ENCODE measurements at regions of chr19 and their contacts with region 1.

Region 1: DNA sequence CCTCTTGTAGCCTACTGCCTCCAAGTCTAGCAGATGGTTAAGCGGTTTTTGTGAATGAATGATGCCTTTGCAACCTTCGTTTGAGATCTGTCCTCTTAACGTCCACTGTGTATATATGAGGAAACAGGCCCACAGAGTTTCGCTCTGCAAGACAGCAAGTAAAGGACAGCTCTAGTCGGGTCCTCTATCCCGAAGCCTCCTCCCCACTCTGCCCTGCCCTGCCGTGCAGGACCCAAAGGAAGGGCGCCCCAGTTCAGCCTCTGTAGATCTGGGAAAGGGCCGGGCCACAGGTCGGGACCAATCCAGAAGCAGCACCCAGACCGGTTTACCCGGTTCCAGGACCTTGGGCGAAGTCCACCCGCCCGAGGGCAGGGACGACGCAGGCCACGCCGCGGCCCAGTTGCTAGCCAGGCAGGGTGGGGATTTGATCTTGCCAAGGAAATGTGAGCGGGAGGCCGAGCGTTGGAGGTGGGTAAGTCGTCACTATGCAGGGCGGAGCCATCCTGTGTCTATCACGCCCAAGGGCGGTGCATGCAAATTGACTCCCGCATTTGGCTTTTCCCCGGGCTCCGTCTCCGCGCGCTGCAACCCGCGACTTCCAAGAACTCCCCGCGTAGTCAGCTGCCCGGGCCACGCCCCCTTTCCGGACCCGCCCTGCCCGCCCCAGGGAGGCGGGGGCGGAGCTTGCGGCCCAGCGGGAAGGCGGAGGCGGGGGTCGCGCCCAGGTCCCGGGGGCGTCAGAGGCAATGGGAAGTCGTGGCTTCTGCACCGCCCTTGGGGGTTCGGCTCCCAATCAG is 12.5 kb downstream of the IER2 start:
- DNase-seq: peak; percentile 98
- ATAC-seq: peak; percentile 84
- H3K4me3 ChIP-seq: peak overlapping the region; percentile 63 to 81 (median 64)
- H3K27ac ChIP-seq: peak overlapping the region; percentile 99
- H3K4me1 ChIP-seq: peaks cover 52% of the 10 kb centered on the region
- H3K27me3 ChIP-seq: no peaks in the 10 kb centered on the region
- CTCF ChIP-seq: 0 out of 2 replicates have a peak, but pooled peaks have one; percentile 26
- EP300 ChIP-seq: no peak; a peak in 1 of 4 replicates
- POLR2A ChIP-seq: peak; percentile 82 to 90
- RAD21 ChIP-seq: peak; percentile 38

Region 2: DNA sequence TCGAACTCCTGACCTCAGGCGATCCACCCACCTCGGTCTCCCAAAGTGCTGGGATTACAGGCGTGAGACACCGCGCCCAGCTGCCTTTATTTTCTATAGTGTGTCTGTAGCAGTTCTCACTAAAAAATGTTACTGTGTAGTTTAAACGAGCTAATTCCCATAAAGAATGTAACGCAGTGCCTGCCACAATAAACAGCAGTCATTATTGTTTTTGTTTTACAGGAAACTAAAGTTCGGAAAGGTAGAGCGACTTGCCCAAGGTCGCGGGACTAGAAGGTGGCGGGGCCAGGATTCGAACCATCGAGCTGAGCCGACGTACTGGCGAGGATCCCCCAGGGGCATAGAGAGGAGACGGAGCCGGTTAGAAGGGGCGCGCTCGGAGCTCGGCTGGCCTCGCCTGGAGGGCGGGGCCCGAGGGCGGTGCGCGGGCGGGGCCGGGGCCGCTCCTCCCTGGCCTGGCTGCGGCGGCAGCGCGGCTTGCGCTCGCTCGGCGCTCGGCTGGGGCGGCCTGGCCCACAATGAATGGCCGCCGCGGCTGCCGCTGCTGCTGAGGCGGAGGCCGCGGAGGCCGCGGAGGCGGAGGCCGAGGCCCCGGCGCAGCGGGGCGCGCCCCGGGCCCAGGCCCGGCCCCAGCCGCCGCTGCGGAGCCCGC is 44.8 kb before region 1 on chr19 and contains the start of gene NACC1:
- CTCF ChIA-PET with region 1: no interaction called
- POLR2A ChIA-PET with region 1: interaction called, 17 read pairs
- in situ Hi-C with region 1: no loop called
- intact Hi-C with region 1: no loop called
- DNase-seq: peak; percentile 74
- ATAC-seq: peak; percentile 76
- H3K4me3 ChIP-seq: peak within 1 kb of the TSS; percentile 96 to 99 (median 99)
- H3K27ac ChIP-seq: peak within 1 kb of the TSS; percentile 91
- H3K4me1 ChIP-seq: peaks cover 42% of the 10 kb centered on the region
- H3K27me3 ChIP-seq: no peaks in the 10 kb centered on the region; a peak in 1 of 5 replicates
- CTCF ChIP-seq: 0 out of 2 replicates have a peak, but pooled peaks have one; percentile 8
- EP300 ChIP-seq: 0 out of 4 replicates have a peak, but pooled peaks of 1 of the 2 experiments have one; percentile 14
- POLR2A ChIP-seq: no peak
- RAD21 ChIP-seq: peak; percentile 7; the same call in 1 of the 2 replicates
- total RNA-seq, gene NACC1: 31.8 and 46.7 TPM in 2 replicates

Region 3: GRCh38 chr19:13441810-13442512 is 279.2 kb after region 1 on chr19:
- CTCF ChIA-PET with region 1: no interaction called
- POLR2A ChIA-PET with region 1: no interaction called
- in situ Hi-C with region 1: no loop called
- intact Hi-C with region 1: no loop called
- DNase-seq: peak; percentile 35
- ATAC-seq: 0 out of 3 replicates have a peak, but pooled peaks have one; percentile 38
- H3K4me3 ChIP-seq: no peak overlapping the region
- H3K27ac ChIP-seq: no peak overlapping the region
- H3K4me1 ChIP-seq: no peaks in the 10 kb centered on the region
- H3K27me3 ChIP-seq: no peaks in the 10 kb centered on the region
- CTCF ChIP-seq: no peak
- EP300 ChIP-seq: no peak
- POLR2A ChIP-seq: no peak
- RAD21 ChIP-seq: no peak

Measured in HepG2 (cell line).